CD4-positive, alpha-beta memory T cell (primary cell): ENCODE measurements at regions of chr15 and their contacts with region 1.

Region 1: DNA sequence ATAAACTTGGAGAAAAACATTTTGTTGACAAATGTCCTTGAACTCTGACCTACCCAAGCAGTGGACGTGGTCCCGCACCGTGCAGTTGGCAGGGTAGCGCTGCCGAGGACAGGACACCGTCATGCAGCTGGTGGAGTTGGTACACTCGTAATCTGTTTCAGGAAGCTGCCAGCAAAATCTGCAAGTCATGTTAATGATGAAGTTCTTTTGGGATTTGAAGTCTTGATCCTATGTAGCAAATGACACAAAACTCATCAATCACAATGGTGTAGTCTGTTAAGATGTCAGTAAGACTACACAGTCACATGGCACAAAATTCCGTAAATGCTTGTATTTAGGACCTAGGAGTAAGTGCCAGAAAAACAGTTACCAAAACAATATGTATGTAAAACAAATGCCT is 5.5 kb downstream of the TM2D3 start:
- DNase-seq: no peak
- H3K4me3 ChIP-seq: no peak overlapping the region
- H3K4me3 Mint-ChIP-seq: no peak overlapping the region
- H3K27ac ChIP-seq: no peak overlapping the region
- H3K27ac Mint-ChIP-seq: peak overlapping the region in 2 of 7 donors; percentile 30 to 95
- H3K4me1 ChIP-seq: peaks cover 41% of the 10 kb centered on the region
- H3K4me1 Mint-ChIP-seq: peaks cover 32 to 52% (median 40%) of the 10 kb centered on the region in 4 donors
- H3K27me3 ChIP-seq: no peaks in the 10 kb centered on the region
- H3K27me3 Mint-ChIP-seq: no peaks in the 10 kb centered on the region

Region 2: DNA sequence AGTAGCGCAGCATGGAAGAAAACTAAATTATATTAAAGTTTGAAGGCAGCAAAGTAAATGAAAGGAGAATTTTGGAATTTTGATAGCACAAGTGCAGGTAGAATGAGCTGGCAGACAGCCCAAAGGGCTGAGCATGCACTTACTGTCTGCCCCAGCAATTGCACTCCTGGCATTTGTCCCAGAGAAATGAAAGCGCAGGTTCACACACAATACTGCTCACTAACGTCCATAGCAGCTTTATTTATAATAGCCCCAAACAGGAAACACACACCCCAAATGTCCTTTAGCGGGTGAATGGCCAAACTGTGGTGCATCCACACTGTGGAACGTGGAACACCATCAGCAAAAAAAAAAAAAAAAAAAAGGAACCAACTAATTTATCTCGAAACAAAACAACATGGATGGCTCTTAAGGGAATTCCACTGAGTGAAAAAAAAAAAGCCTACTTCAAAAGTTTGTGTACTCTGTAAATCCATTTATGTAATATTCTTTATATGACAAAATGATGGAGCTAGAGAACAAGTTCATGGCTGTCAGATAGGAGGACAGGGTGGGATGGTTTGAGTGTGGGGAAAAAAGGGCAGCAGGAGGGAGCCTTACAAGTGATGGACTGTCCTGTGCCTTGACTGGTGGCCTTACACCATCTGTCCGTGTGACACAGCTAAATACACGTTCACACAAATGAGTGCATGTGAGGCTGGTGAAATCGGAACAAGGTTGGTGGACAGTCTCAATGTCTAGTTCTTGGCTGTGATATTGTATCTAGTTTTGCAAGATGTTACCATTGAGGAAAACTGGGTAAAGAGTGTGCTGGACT is 11.5 kb after region 1 on chr15:
- CTCF ChIA-PET with region 1: interaction called, 10 read pairs
- POLR2A ChIA-PET with region 1: interaction called, 28 read pairs
- intact Hi-C with region 1: no loop called
- DNase-seq: no peak
- H3K4me3 ChIP-seq: no peak overlapping the region
- H3K4me3 Mint-ChIP-seq: no peak overlapping the region
- H3K27ac ChIP-seq: no peak overlapping the region
- H3K27ac Mint-ChIP-seq: peak overlapping the region in 1 of 7 donors; percentile 22
- H3K4me1 ChIP-seq: peaks cover 1% of the 10 kb centered on the region
- H3K4me1 Mint-ChIP-seq: peaks cover 0 to 13% (median 1%) of the 10 kb centered on the region in 4 donors
- H3K27me3 ChIP-seq: no peaks in the 10 kb centered on the region
- H3K27me3 Mint-ChIP-seq: no peaks in the 10 kb centered on the region

Region 3: GRCh38 chr15:101675796-101676582 is 29.3 kb after region 1 on chr15:
- CTCF ChIA-PET with region 1: no interaction called
- POLR2A ChIA-PET with region 1: no interaction called
- intact Hi-C with region 1: no loop called
- DNase-seq: peak in 1 of 5 donors; percentile 33
- H3K4me3 ChIP-seq: no peak overlapping the region
- H3K4me3 Mint-ChIP-seq: peak overlapping the region; percentile 11 to 76 (median 54)
- H3K27ac ChIP-seq: no peak overlapping the region
- H3K27ac Mint-ChIP-seq: peak overlapping the region; percentile 15 to 82 (median 65)
- H3K4me1 ChIP-seq: no peaks in the 10 kb centered on the region
- H3K4me1 Mint-ChIP-seq: peaks cover 1 to 14% (median 7%) of the 10 kb centered on the region in 4 donors
- H3K27me3 ChIP-seq: no peaks in the 10 kb centered on the region
- H3K27me3 Mint-ChIP-seq: no peaks in the 10 kb centered on the region